ENCODE measurements at regions of chr11 and their contacts with region 1.

Region 1: GRCh38 chr11:27698872-27699474 is 1.3 kb downstream of the BDNF start:
- DNase-seq: peak; percentile 22 to 74
- H3K4me3 ChIP-seq: peak overlapping the region; percentile 75 to 79
- H3K27ac ChIP-seq: no peak overlapping the region
- H3K4me1 ChIP-seq: peaks cover 0 to 20% of the 10 kb centered on the region in 2 donors
- H3K27me3 ChIP-seq: peaks cover 7% of the 10 kb centered on the region
- CTCF ChIP-seq: peak; percentile 42 to 89 (median 76)

Region 2: DNA sequence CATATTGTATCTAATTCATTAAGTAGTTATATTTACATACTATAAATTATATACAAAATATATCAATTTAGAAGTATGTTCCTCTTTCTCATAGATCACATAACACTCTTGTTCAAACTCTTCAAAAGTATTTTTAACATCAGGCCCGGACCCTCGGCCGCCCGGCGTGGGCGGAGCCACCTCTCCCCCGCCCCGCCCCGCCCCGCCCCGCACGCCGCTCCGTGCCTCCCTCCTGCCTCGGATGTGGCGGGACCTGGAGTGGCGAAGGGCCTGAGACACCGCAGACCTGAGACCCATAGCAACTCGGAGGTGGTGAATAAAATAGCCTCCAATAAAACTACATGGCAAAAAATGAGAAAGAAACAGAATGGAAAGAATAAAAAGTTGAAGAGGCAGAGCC is 107.1 kb after region 1 on chr11:
- intact Hi-C with region 1: no loop called
- DNase-seq: no peak
- H3K4me3 ChIP-seq: no peak overlapping the region
- H3K27ac ChIP-seq: no peak overlapping the region
- H3K4me1 ChIP-seq: no peaks in the 10 kb centered on the region
- H3K27me3 ChIP-seq: no peaks in the 10 kb centered on the region
- CTCF ChIP-seq: no peak

Region 3: DNA sequence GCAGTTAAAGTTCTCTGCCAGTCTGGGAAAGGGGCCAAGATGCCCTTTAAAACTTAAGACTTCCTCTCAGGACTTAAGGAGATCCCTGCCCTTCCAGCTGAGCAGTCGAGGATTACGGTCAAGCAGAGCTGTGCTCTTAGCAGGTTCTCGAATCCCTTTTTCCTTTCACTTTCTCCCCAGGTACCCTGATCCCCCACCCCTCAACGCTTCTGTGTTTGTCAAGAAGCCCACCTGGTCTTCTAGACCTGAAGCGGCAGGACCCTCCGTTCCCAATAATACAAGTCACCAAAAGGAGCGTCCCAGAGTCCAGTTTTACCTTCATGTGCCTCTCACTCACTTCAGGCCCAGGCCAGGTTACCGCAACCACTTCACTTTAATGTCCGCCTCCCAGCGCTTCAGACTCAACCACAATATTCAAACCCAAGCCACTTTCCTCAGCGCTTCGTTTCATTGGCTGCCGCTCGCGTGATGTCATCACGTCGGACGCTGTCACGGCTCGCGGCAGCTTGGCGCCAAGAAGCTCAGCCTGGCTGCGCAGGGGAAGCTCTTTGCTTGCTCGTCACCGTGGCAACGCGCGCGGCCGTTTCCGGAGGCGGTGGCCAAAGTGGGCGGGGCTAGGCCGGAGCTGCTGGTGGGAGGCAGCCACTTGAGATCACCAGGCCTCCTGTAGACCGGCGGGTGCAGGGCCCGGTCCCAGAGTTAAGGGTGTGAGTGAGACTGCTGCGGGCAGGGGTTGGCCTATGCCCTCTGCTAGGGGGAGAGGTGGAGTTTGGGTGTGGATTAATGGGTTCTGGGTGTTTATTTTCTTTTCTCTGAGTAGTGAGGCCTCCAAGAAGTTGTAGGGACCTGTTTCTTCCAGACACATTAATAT is 409.0 kb after region 1 on chr11 and contains the starts of genes KIF18A and METTL15:
- intact Hi-C with region 1: loop called (anchors 5 kb)
- DNase-seq: peak; percentile 98 to 100
- H3K4me3 ChIP-seq: peak within 1 kb of the TSS; percentile 74 to 76
- H3K27ac ChIP-seq: peak within 1 kb of the TSS; percentile 87 to 88
- H3K4me1 ChIP-seq: peaks cover 4 to 15% of the 10 kb centered on the region in 2 donors
- H3K27me3 ChIP-seq: no peaks in the 10 kb centered on the region
- CTCF ChIP-seq: no peak
- total RNA-seq, gene KIF18A: not detected
- total RNA-seq, gene METTL15: 0.32 TPM

Region 4: GRCh38 chr11:28529540-28530410 is 830.8 kb after region 1 on chr11:
- intact Hi-C with region 1: loop called (anchors 2 kb)
- DNase-seq: no peak
- H3K4me3 ChIP-seq: no peak overlapping the region
- H3K27ac ChIP-seq: no peak overlapping the region
- H3K4me1 ChIP-seq: no peaks in the 10 kb centered on the region
- H3K27me3 ChIP-seq: no peaks in the 10 kb centered on the region
- CTCF ChIP-seq: peak in 1 of 3 experiments; percentile 26

Region 5: DNA sequence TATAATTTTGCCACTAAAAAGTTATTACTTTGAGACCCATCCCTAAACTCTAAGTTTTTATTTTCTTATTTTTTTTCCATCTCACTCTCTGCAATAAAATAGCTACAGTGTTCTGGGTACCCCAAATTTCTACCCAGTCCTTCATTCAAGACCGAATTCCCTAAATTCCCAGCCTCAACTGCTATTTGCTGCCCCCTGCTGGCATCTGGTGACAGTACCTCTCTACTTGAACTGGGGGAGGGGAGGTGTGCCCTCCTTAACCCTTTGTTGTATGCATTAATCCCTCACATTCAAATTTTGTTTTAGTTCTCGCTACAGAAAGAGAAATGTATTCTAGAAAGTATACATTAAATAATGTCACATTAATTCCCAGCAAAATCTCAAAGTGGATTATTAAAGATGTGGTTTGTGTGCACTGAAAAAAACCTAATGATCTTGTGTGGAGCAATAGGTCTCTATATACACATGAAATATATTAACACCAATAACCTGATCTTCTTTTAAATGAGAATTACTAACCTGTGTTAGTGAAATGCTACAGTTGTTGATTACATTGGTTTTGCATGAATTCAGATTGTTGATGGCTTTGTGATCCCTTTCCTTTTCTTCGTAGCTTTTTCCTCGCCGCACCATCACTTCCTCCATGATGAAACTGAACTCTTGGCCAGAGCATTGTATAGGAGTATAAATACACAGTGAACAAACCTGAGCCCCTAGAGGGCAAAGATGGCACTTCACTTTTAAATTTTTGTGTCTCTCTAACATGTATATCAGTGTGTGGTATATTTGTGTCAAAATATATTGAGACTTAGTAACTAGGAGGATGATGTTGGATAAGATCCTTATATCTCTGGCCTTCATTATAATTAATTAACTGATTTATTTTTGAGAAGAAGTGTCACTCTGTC is 999.2 kb after region 1 on chr11:
- intact Hi-C with region 1: loop called (anchors 5 kb)
- DNase-seq: no peak
- H3K4me3 ChIP-seq: no peak overlapping the region
- H3K27ac ChIP-seq: no peak overlapping the region
- H3K4me1 ChIP-seq: no peaks in the 10 kb centered on the region
- H3K27me3 ChIP-seq: no peaks in the 10 kb centered on the region
- CTCF ChIP-seq: peak; percentile 47 to 65 (median 50)

Region 6: DNA sequence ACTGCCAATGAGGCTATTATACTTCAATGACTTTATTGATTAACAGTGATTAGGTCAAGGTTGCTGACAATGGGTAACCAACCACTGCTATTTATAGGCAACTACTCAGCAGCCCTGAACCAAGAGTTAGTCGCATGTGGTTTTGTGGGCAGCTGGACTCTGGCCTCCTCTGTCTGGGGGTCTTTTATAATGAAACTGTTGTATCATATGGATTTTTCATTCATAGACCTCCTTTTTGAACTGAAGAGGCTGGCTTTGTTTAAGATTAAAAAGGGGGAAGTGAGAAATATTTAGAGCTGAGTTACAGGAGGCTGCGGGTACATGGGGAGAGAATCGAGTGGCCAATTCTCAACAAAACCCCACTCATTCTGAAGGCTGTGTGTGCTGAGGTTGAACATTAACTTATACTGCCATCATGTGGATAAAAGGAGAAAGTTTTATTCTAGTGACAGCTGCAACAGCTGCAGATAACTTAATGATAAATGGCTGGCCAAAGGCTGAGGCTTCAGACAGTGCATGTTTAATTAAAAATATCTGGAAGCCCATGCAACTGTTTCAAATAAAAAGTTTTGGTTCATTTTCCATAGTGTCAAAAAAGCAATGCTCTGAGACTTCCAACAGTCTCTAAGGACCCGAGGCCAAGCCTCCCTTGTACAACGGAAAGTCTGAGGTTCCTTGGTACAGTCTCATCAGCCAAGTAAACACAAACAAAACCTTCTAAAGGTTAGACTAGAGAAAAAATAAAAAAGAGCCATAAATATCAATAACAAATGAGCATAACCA is 1635.2 kb after region 1 on chr11:
- intact Hi-C with region 1: loop called (anchors 5 kb)
- DNase-seq: no peak
- H3K4me3 ChIP-seq: no peak overlapping the region
- H3K27ac ChIP-seq: no peak overlapping the region
- H3K4me1 ChIP-seq: no peaks in the 10 kb centered on the region
- H3K27me3 ChIP-seq: no peaks in the 10 kb centered on the region
- CTCF ChIP-seq: peak in 2 of 3 experiments; percentile 20 to 49

Measured in ascending aorta (tissue), 2 donors.